HEK293 (cell line): ENCODE measurements at regions of chr12 and their contacts with region 1.

Region 1: DNA sequence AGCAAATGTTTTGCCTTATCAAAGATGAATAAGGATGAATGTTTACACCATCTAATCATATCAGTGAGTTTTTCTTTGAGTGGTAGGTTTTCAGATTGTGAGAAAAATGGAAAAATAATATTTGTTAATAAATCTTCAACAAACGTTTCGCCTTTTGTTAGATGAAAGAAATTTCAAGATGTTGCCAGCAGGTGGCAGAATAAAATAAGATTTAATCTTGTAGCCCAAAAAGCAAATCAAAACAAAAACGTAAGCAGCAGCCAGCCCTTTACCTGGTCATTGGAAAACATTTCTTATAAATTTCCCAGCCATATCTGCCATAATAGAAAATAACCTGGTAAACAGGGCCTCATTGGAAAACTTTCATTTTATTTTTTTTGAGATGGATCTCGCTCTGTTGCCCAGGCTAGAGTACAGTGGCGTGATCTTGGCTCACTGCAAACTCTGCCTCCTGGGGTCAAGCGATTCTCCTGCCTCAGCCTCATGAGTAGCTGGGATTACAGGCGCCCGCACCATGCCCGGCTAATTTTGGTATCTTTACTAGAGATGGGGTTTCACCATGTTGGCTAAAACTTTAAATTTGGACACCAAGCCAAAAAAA is 15.4 kb upstream of the TMEM120B start:
- H3K4me3 ChIP-seq: no peak overlapping the region
- H3K27ac ChIP-seq: no peak overlapping the region
- H3K4me1 ChIP-seq: no peaks in the 10 kb centered on the region
- CTCF ChIP-seq: 0 out of 2 replicates have a peak, but pooled peaks have one; percentile 31

Region 2: DNA sequence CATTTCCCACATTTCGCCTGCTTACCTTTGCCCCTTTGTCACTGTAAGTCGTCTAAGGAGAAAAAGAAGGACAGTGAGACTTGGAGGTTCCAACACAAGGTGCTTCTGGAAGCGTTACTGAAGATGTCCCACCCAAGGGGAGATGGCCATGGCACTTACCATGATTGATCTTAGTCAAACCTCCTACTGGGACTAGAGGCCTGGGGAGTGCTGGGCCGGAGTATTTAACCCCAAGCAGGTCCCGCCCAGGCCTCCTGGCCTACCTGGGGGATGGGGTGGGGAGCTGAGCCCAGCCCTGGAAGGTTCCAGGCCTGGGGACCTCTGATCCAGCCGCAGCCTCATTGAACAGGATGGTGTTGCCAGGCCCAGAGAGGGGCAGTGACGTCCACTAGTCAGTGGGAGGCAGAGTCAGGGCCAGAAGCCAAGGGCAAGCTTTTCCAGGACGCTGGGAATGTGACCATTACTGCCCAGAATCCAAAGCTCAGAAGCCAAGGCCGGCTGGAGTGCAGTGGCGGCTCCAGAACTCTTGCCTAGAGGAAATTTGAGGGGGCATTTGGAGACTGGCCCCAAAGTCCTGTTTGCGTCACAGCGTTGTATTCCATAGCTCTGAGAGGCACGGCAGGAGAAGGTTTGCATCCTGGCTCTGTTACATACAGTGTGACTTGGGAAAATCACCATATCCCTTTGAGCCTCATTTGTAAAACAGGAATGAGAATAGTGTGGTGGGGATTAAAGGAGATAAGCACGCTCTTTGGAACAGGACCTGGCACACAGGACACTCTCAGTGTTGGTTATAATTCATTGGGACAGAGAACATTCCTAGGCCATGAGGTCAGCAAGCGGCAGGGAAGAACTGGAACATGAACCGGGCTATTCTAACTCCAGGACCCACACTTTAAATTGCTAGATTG is 161.7 kb after region 1 on chr12 and contains the start of gene HPD:
- CTCF ChIA-PET with region 1: no interaction called
- POLR2A ChIA-PET with region 1: interaction called, 10 read pairs
- H3K4me3 ChIP-seq: no peak within 1 kb of the TSS
- H3K27ac ChIP-seq: no peak within 1 kb of the TSS
- H3K4me1 ChIP-seq: peaks cover 8% of the 10 kb centered on the region; the same call in 1 of the 2 replicates
- CTCF ChIP-seq: no peak